Activated CD4-positive, alpha-beta memory T cell treated with anti-CD3 and anti-CD28 coated beads for 36 hours (primary cell): ENCODE measurements at regions of chr11 and their contacts with region 1.

Region 1: GRCh38 chr11:102346748-102347461 is at the start of gene BIRC2:
- DNase-seq: peak; percentile 96
- H3K4me3 Mint-ChIP-seq: peak within 1 kb of the TSS; percentile 90
- H3K27ac Mint-ChIP-seq: peak within 1 kb of the TSS; percentile 100
- H3K4me1 Mint-ChIP-seq: peaks cover 44% of the 10 kb centered on the region
- H3K27me3 Mint-ChIP-seq: no peaks in the 10 kb centered on the region
- total RNA-seq, gene BIRC2: 33.7 to 34.3 TPM

Region 2: GRCh38 chr11:102225689-102226568 is 121.0 kb before region 1 on chr11:
- CTCF ChIA-PET with region 1: no interaction called
- POLR2A ChIA-PET with region 1: no interaction called
- intact Hi-C with region 1: no loop called
- DNase-seq: no peak
- H3K4me3 Mint-ChIP-seq: no peak overlapping the region
- H3K27ac Mint-ChIP-seq: no peak overlapping the region
- H3K4me1 Mint-ChIP-seq: no peaks in the 10 kb centered on the region
- H3K27me3 Mint-ChIP-seq: peaks cover 2% of the 10 kb centered on the region

Region 3: GRCh38 chr11:102293873-102294601 is 52.9 kb before region 1 on chr11:
- CTCF ChIA-PET with region 1: interaction called, 103 read pairs
- POLR2A ChIA-PET with region 1: interaction called, 3 read pairs
- intact Hi-C with region 1: loop called (anchors 1 kb)
- DNase-seq: no peak
- H3K4me3 Mint-ChIP-seq: peak overlapping the region; percentile 81
- H3K27ac Mint-ChIP-seq: peak overlapping the region; percentile 84
- H3K4me1 Mint-ChIP-seq: peaks cover 33% of the 10 kb centered on the region
- H3K27me3 Mint-ChIP-seq: no peaks in the 10 kb centered on the region

Region 4: DNA sequence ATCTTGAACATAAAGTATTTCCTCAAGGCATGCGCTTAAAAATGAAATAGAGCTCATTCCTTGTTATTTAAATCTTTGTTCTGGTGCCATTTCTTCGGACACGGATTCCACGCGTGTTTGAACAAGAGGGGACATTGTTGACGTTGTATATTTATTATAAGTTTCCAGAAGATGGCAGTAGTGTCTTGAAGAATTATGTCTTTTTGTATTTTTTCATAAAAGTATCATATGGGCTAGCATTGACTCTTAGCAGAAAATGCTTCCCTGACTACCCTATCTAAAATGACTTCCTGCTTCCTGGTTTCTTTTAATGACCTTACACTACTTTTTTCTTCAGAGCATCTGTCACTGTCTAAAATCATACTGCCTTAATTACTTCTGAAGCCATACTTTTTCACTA is 20.5 kb after region 1 on chr11:
- CTCF ChIA-PET with region 1: interaction called, 6 read pairs
- POLR2A ChIA-PET with region 1: no interaction called
- intact Hi-C with region 1: loop called (anchors 1 kb)
- DNase-seq: no peak
- H3K4me3 Mint-ChIP-seq: no peak overlapping the region
- H3K27ac Mint-ChIP-seq: peak overlapping the region; percentile 15
- H3K4me1 Mint-ChIP-seq: peaks cover 22% of the 10 kb centered on the region
- H3K27me3 Mint-ChIP-seq: no peaks in the 10 kb centered on the region

Region 5: DNA sequence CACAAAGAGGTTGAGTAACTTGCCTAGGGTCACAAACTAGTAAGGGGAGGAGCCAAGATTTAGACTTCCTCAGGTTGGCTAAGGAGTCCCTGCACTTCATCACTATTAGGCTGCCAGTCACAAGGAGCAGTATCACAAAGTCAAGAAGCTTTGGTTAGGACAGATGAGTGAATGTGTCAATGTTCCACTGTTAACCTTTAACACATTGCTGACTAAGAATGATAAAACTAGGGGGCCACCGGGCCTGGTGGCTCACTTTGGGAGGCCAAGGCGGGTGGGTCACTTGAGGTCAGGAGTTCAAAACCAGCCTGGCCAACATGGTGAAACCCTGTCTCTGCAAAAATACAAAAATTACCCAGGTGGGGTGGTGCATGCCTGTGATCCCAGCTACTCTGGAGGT is 73.6 kb after region 1 on chr11:
- CTCF ChIA-PET with region 1: interaction called, 4 read pairs
- POLR2A ChIA-PET with region 1: no interaction called
- intact Hi-C with region 1: loop called (anchors 1 kb)
- DNase-seq: peak; percentile 67
- H3K4me3 Mint-ChIP-seq: no peak overlapping the region
- H3K27ac Mint-ChIP-seq: peak overlapping the region; percentile 52
- H3K4me1 Mint-ChIP-seq: peaks cover 93% of the 10 kb centered on the region
- H3K27me3 Mint-ChIP-seq: no peaks in the 10 kb centered on the region

Region 6: GRCh38 chr11:102451681-102452460 is 105.0 kb after region 1 on chr11:
- CTCF ChIA-PET with region 1: interaction called, 7 read pairs
- POLR2A ChIA-PET with region 1: interaction called, 4 read pairs
- intact Hi-C with region 1: loop called (anchors 1 kb)
- DNase-seq: peak; percentile 86
- H3K4me3 Mint-ChIP-seq: peak overlapping the region; percentile 84
- H3K27ac Mint-ChIP-seq: peak overlapping the region; percentile 96
- H3K4me1 Mint-ChIP-seq: peaks cover 75% of the 10 kb centered on the region
- H3K27me3 Mint-ChIP-seq: no peaks in the 10 kb centered on the region

Region 7: DNA sequence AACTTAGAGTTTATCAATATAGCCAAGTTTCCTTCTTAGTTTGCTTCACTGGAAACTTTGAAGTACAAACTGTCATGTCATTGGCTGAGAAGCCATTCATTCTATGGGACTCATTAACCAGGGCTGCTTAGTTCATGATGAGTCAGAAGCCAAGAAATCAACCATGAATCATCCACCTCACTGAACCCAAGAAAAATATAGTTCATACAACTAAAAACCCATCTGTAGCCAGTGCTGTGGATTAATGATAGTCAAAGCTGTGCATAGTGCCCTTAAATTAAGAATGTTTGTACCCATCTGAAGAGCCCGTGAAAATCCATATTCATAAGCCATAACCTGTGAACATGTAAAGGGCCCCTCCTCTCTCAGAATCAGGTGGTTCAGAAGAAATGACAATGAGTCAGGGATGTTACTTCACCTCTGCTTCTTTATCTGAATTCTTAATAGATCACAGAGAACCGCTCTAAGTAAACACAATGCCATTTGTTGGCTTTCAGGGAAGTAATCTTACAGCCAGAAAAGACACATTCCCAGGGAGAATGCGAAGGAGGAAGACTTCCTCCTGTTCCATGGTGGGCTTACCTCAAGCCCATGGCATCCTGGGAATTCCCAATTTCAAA is 252.8 kb after region 1 on chr11:
- CTCF ChIA-PET with region 1: interaction called, 5 read pairs
- POLR2A ChIA-PET with region 1: no interaction called
- intact Hi-C with region 1: loop called (anchors 1 kb)
- DNase-seq: no peak
- H3K4me3 Mint-ChIP-seq: no peak overlapping the region
- H3K27ac Mint-ChIP-seq: peak overlapping the region; percentile 75
- H3K4me1 Mint-ChIP-seq: peaks cover 35% of the 10 kb centered on the region
- H3K27me3 Mint-ChIP-seq: peaks cover 1% of the 10 kb centered on the region